ENCODE measurements at regions of chr11 and their contacts with region 1.

Region 1: DNA sequence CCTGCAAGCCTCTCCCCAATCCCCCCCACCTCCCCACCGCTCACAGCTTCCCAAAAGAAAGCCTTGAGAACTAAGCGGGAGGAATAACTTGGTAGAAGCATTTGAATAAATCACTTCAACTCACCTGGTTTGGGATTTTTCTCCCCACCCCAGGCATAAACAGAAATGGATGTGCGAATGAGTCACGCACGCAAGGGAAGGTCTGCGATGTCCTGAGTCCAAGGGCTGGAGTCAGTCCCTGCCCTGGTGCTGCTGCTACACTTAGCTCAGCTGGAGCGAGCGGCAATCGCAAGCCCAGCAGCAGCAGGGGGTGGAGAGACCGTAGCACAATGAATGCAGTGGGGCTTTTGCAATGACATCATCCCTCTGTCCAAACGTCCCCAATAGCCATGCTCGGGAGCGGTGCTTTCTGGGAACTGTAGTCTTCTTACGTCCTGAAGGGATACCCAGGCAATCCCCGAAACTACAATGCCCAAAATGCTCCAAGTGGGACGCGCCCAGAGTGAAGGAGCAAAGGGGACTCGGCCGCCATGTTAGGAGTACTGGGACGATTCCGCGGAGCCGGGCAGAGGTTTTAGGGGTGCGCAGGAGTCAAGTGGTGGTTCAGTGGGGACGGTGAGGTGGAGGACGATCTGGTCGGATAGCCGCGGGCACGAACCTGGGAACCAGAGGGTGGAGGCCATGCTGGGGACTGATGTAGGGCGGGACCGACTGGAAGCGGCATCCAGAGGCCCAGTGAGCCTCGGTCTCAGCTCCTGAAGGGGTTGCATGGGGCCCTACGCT is at the start of gene RAB30:
- DNase-seq: peak; percentile 93 to 99 (median 98)
- ATAC-seq: peak; percentile 98 to 99 (median 99)
- H3K4me3 ChIP-seq: peak within 1 kb of the TSS; percentile 56 to 95 (median 84)
- H3K27ac ChIP-seq: peak within 1 kb of the TSS; percentile 63 to 95 (median 93)
- H3K4me1 ChIP-seq: peaks cover 12 to 64% (median 39%) of the 10 kb centered on the region in 12 donors
- H3K27me3 ChIP-seq: no peaks in the 10 kb centered on the region
- CTCF ChIP-seq: no peak
- POLR2A ChIP-seq: peak; percentile 51 to 88
- total RNA-seq, gene RAB30: 13.8 to 28.4 (median 23.4) TPM

Region 2: DNA sequence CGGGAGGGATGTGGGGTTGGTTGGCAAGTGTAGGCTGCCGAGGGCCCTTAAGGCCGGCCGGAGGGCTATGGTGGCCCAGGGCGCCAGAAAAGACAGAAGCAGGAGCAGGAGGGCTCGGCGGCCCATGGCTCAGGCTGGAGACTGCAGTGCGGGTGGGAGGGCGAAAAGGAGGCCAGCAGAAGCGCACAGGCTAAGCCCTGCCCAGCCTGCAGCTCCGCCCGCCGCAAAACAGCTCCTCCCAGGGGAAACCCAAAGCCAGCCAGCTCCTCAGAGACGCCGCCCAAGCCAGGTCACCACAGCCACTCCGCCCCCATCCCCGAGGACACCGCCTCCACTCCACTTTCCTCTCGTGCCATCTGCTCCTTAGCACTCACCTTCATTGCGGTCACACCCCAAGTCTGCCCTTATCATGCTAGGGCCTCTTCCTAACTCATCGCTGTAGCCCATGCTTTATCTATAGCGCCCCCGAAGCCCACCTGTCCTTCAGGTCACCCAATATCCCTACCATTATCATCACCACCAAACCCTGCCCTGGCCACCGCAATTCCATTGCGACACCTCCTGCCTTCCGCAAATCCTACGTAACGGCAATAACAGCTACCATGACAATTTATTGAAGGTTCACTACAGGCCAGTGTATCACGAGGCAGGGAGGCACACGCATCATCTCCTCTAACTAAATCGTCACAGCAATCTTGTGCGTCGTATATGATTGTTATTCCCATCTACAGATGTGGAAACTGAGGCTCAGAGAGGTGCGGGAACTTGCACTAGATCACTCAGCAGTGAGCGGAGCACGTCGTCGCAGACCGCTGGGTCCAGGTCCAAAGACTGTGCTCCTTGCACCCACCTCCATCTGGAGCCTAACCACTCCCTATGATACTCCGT is 171.2 kb before region 1 on chr11 and contains the start of gene PRCP:
- intact Hi-C with region 1: loop called in 5 of 10 experiments (anchors 5 kb)
- DNase-seq: peak; percentile 94 to 97 (median 95)
- ATAC-seq: peak; percentile 94 to 96 (median 96)
- H3K4me3 ChIP-seq: peak within 1 kb of the TSS; percentile 55 to 93 (median 74)
- H3K27ac ChIP-seq: peak within 1 kb of the TSS; percentile 31 to 93 (median 86)
- H3K4me1 ChIP-seq: peaks cover 0 to 53% (median 23%) of the 10 kb centered on the region in 12 donors
- H3K27me3 ChIP-seq: no peaks in the 10 kb centered on the region
- CTCF ChIP-seq: peak in 1 of 12 donors; percentile 32
- POLR2A ChIP-seq: peak in 1 of 2 donors; percentile 92
- total RNA-seq, gene PRCP: 29.7 to 99.4 (median 44.0) TPM

Region 3: GRCh38 chr11:82927254-82927880 is 144.4 kb before region 1 on chr11:
- intact Hi-C with region 1: loop called in 4 of 10 experiments (anchors 5 to 10 kb)
- DNase-seq: no peak
- ATAC-seq: peak in 2 of 4 donors; percentile 41 to 64
- H3K4me3 ChIP-seq: no peak overlapping the region
- H3K27ac ChIP-seq: no peak overlapping the region
- H3K4me1 ChIP-seq: peaks cover 0 to 12% (median 0%) of the 10 kb centered on the region in 12 donors
- H3K27me3 ChIP-seq: no peaks in the 10 kb centered on the region
- CTCF ChIP-seq: peak; percentile 69 to 90 (median 86)
- POLR2A ChIP-seq: no peak

Region 4: GRCh38 chr11:82988936-82989627 is 82.7 kb before region 1 on chr11:
- intact Hi-C with region 1: loop called in 3 of 10 experiments (anchors 5 to 10 kb)
- DNase-seq: no peak
- ATAC-seq: peak in 1 of 4 donors; percentile 8
- H3K4me3 ChIP-seq: no peak overlapping the region
- H3K27ac ChIP-seq: peak overlapping the region in 1 of 12 donors; percentile 11
- H3K4me1 ChIP-seq: peaks cover 0 to 52% (median 14%) of the 10 kb centered on the region in 12 donors
- H3K27me3 ChIP-seq: no peaks in the 10 kb centered on the region
- CTCF ChIP-seq: no peak
- POLR2A ChIP-seq: no peak

Region 5: DNA sequence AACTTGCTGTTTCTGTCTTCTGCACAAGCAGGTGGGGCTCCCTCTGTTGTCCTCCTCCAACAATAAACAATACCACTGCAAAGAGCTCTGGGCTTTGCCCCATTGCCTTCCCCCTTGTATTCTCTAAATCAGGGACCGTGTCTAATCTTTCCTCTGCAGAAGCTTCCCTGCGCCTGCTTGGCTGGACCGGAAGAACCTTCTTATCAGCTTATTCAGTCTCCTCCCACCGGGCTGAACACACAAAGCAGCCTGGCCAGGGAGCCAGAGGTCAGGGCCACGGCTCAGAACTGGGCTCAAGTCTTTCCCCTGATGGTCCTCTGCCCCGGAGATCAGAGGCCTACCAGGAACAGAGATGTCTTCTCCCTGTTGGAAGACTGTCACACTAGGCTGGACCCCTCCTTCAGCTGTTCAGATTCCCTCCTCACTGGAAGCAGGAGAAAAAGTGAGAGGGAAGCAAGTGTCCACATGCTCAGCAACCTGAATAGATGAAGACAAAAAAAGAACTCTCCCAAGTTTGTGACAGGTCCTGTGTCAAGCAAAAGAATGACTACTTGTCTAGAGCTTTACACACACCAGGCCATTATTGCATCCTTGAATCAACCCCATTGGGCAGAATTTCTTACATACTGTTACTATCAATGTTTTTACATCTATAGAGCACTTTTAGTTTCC is 63.7 kb before region 1 on chr11:
- intact Hi-C with region 1: loop called in 4 of 10 experiments (anchors 5 kb)
- DNase-seq: peak; percentile 59 to 78 (median 75)
- ATAC-seq: peak; percentile 82 to 94 (median 89)
- H3K4me3 ChIP-seq: peak overlapping the region in 1 of 12 donors; percentile 4
- H3K27ac ChIP-seq: peak overlapping the region; percentile 12 to 78 (median 68)
- H3K4me1 ChIP-seq: peaks cover 7 to 59% (median 42%) of the 10 kb centered on the region in 12 donors
- H3K27me3 ChIP-seq: no peaks in the 10 kb centered on the region
- CTCF ChIP-seq: no peak
- POLR2A ChIP-seq: no peak

Region 6: DNA sequence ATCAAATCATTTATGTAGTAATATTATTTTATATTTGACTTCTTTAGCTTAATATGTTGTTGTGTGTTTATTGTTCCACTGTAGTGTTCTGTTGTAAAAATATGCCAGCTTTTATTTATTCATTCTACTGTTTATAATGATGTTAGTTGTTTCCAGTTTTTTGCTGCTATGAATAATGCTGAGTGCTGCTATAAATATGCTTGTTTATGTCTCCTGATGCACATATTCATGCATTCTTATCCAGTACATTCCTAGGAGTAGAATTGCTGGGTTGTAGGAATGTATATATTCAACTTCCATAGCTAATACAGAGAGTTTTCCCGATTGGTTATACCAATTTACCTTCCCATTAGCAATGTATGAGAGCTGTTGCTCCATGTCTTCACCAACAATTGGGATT is 33.4 kb after region 1 on chr11:
- intact Hi-C with region 1: loop called in 1 of 10 experiments (anchors 2 kb)
- DNase-seq: no peak
- ATAC-seq: no peak
- H3K4me3 ChIP-seq: no peak overlapping the region
- H3K27ac ChIP-seq: no peak overlapping the region
- H3K4me1 ChIP-seq: no peaks in the 10 kb centered on the region
- H3K27me3 ChIP-seq: no peaks in the 10 kb centered on the region
- CTCF ChIP-seq: no peak
- POLR2A ChIP-seq: no peak

Region 7: GRCh38 chr11:83193315-83194280 is 121.8 kb after region 1 on chr11 and contains the start of gene ANKRD42:
- intact Hi-C with region 1: loop called in 2 of 10 experiments (anchors 5 to 10 kb)
- DNase-seq: peak; percentile 93 to 96 (median 94)
- ATAC-seq: peak; percentile 95 to 98 (median 98)
- H3K4me3 ChIP-seq: peak within 1 kb of the TSS; percentile 49 to 97 (median 84)
- H3K27ac ChIP-seq: peak within 1 kb of the TSS; percentile 58 to 96 (median 89)
- H3K4me1 ChIP-seq: peaks cover 0 to 40% (median 24%) of the 10 kb centered on the region in 12 donors
- H3K27me3 ChIP-seq: no peaks in the 10 kb centered on the region
- CTCF ChIP-seq: no peak
- POLR2A ChIP-seq: peak in 1 of 2 donors; percentile 60
- total RNA-seq, gene ANKRD42: 3.7 to 9.1 (median 6.0) TPM

Measured in heart left ventricle (tissue), 16 donors.